Right cardiac atrium (tissue), 5 donors: ENCODE measurements at regions of chr5 and their contacts with region 1.

Region 1: GRCh38 chr5:146291421-146292074 is 47.1 kb upstream of the POU4F3 start:
- DNase-seq: no peak
- ATAC-seq: peak in 1 of 2 donors; percentile 26
- H3K4me3 ChIP-seq: no peak overlapping the region
- H3K27ac ChIP-seq: no peak overlapping the region
- H3K4me1 ChIP-seq: no peaks in the 10 kb centered on the region
- H3K27me3 ChIP-seq: no peaks in the 10 kb centered on the region

Region 2: GRCh38 chr5:146179696-146180095 is 111.9 kb before region 1 on chr5:
- intact Hi-C with region 1: no loop called
- DNase-seq: no peak
- ATAC-seq: no peak
- H3K4me3 ChIP-seq: no peak overlapping the region
- H3K27ac ChIP-seq: no peak overlapping the region
- H3K4me1 ChIP-seq: peaks cover 2% of the 10 kb centered on the region
- H3K27me3 ChIP-seq: no peaks in the 10 kb centered on the region

Region 3: DNA sequence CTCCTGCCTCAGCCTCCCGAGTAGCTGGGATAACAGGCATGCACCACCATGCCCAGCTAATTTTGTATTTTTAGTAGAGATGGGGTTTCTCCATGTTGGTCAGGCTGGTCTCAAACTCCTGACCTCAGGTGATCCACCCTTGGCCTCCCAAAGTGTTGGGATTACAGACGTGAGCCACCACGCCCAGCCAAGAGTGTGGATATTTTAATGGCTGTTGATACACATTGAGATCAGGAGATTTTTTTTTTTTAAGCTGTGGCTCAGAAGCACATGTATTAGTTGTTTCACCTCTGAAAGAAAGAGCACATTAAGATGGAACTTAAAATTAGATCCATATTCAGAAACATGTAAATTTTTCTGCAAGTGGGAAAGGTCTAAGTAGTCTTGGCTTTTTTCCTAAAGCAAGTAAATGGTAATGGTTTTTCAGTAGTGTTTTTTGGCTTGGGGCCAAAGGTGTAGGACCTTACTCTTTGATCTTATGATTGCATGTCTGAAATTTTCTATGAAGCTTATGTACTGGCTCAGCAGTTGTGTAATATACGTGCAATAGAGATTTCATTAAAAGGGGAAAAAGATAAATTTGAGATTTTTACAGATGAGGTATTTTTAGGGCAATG is 78.2 kb before region 1 on chr5:
- intact Hi-C with region 1: no loop called
- DNase-seq: no peak
- ATAC-seq: no peak
- H3K4me3 ChIP-seq: no peak overlapping the region
- H3K27ac ChIP-seq: no peak overlapping the region
- H3K4me1 ChIP-seq: peaks cover 1% of the 10 kb centered on the region
- H3K27me3 ChIP-seq: no peaks in the 10 kb centered on the region

Region 4: GRCh38 chr5:146340260-146341081 is 48.9 kb after region 1 on chr5:
- intact Hi-C with region 1: no loop called
- DNase-seq: peak; percentile 65 to 84 (median 81)
- ATAC-seq: peak in 1 of 2 donors; percentile 46
- H3K4me3 ChIP-seq: no peak overlapping the region
- H3K27ac ChIP-seq: no peak overlapping the region
- H3K4me1 ChIP-seq: peaks cover 2% of the 10 kb centered on the region
- H3K27me3 ChIP-seq: no peaks in the 10 kb centered on the region

Region 5: GRCh38 chr5:146426853-146427618 is 135.5 kb after region 1 on chr5:
- intact Hi-C with region 1: loop called (anchors 2 to 5 kb)
- DNase-seq: no peak
- ATAC-seq: peak; percentile 56 to 57
- H3K4me3 ChIP-seq: no peak overlapping the region
- H3K27ac ChIP-seq: no peak overlapping the region
- H3K4me1 ChIP-seq: no peaks in the 10 kb centered on the region
- H3K27me3 ChIP-seq: no peaks in the 10 kb centered on the region